ENCODE measurements at regions of chr3 and their contacts with region 1.

Region 1: GRCh38 chr3:35690271-35690670 is 50.9 kb downstream of the ARPP21 start:
- DNase-seq: no peak
- H3K4me3 ChIP-seq: no peak overlapping the region
- H3K27ac ChIP-seq: no peak overlapping the region
- H3K4me1 ChIP-seq: no peaks in the 10 kb centered on the region
- CTCF ChIP-seq: no peak

Region 2: DNA sequence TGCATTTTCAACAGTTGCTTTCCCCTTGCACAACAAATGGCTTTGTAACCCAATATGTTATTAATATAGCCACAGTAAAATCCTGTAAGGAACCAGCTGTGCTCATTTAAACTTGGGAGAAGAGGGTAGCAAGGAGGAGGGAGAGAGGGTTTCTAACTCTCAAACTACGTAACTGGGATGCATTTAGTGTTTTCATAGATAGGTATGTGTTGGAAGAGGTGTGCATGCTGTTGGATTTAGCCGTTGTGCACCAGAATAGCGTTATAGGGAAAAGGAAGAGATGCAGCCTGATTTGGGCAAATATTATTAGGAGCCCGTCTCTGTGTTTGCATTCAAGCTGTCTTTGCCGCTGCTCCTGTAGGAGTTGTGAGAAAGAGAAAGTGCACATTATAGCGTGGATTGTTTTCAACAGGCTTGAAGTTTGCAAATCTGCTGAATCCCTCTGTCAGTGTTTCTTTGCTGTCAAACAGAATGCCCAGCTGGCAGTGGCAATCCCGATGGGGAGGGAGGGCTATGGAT is 11.6 kb before region 1 on chr3:
- CTCF ChIA-PET with region 1: no interaction called
- POLR2A ChIA-PET with region 1: interaction called, 18 read pairs
- intact Hi-C with region 1: no loop called
- DNase-seq: peak; percentile 13
- H3K4me3 ChIP-seq: peak overlapping the region; percentile 45
- H3K27ac ChIP-seq: no peak overlapping the region
- H3K4me1 ChIP-seq: peaks cover 66% of the 10 kb centered on the region
- CTCF ChIP-seq: no peak

Measured in OCI-LY7 (cell line).